Dorsolateral prefrontal cortex (tissue), 120 donors: ENCODE measurements at regions of chr6 and their contacts with region 1.

Region 1: GRCh38 chr6:44475779-44476434 is 88.4 kb downstream of the CDC5L start:
- DNase-seq: peak; percentile 71 to 89 (median 81)
- H3K4me3 ChIP-seq: peak overlapping the region in 38 of 59 donors; percentile 11 to 48 (median 28)
- H3K27ac ChIP-seq: peak overlapping the region in 5 of 59 donors; percentile 34 to 65 (median 49)
- H3K27me3 ChIP-seq: no peaks in the 10 kb centered on the region
- CTCF ChIP-seq: peak; percentile 72 to 99 (median 94)

Region 2: GRCh38 chr6:44381739-44382138 is 94.2 kb before region 1 on chr6:
- intact Hi-C with region 1: no loop called
- DNase-seq: no peak
- H3K4me3 ChIP-seq: no peak overlapping the region
- H3K27ac ChIP-seq: peak overlapping the region in 2 of 59 donors; percentile 29 to 32
- H3K27me3 ChIP-seq: no peaks in the 10 kb centered on the region
- CTCF ChIP-seq: no peak

Region 3: DNA sequence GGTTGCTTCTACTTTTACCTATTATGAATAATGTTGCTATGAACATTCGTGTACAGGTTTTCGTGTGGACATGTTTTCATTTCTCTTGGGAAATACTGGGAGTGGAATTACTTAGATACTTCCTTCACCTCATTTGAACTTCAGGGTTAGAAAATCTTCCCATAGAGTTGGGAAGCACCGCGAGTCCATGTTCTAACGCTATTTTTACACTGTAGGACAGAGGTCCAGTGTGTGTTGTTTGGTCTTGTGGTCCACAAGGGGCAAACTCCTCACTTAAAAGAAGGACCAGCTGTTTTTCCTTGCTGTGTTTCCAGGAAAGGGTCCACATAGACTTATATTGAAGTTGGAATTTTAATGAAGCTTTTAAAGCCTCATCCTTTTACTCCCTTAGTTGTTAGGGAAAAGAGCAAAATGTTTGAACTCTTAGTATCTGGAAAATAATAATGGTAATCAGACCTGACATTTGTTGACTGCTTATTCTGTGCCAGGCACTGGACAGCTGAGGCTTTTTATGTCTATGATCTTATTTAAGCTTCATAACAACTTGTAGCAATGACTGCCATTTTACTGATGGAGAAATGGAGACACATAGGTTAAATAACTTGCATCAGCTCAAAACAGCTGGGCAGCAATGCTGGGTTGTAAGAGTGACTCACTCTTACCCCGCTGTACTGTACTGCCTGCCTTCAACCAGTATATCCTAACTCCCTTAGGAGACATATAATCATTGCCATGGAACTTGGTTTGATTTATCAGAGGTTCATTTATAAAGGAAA is 36.4 kb before region 1 on chr6:
- intact Hi-C with region 1: no loop called
- DNase-seq: no peak
- H3K4me3 ChIP-seq: no peak overlapping the region
- H3K27ac ChIP-seq: no peak overlapping the region
- H3K27me3 ChIP-seq: no peaks in the 10 kb centered on the region
- CTCF ChIP-seq: no peak

Region 4: GRCh38 chr6:44655412-44656342 is 179.8 kb after region 1 on chr6:
- intact Hi-C with region 1: loop called (anchors 5 to 10 kb)
- DNase-seq: peak in 9 of 10 donors; percentile 47 to 83 (median 74)
- H3K4me3 ChIP-seq: peak overlapping the region in 3 of 59 donors; percentile 10 to 21 (median 13)
- H3K27ac ChIP-seq: no peak overlapping the region
- H3K27me3 ChIP-seq: no peaks in the 10 kb centered on the region
- CTCF ChIP-seq: peak; percentile 81 to 99 (median 94)